A549 (cell line): ENCODE measurements at regions of chr17 and their contacts with region 1.

Region 1: DNA sequence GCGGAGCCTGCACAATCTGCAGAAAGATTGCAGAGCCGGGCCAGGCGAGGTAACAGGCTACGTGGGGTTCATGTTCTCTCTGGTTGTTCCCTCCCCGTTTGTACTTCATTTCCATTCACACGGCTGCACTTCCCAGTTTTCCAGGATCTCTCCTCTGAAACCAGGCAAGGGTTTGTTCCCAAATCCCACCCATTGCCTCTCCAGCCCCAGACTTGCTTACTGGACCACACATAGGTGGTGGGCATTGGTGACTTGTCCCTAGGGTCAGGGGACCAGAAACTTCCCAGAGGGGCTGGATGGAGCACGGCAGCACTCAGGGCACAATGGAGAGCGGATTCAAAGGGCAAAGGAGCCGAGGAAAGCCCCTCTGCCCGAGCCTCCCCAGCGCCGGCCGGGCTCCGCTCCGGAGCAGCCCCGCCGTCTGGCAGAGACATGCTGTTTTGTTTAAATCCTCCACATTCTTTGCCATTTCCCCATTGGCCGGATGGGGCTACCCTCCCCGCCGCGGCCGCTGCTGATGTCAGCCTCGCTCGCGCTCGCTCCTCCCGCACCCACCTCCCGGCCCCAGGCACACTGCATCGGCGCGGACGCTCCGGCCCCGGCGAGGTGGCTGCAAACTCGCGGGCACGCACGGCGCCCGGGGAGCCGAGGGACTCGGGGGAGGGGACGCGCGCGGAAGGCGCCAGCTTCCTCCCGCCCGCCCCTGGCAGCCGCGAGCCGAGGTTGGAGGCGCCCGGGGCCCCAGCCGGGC is at the start of gene PITPNC1:
- DNase-seq: peak; percentile 84 to 86
- ATAC-seq: peak; percentile 72 to 83
- H3K4me3 ChIP-seq: peak within 1 kb of the TSS; percentile 65
- H3K27ac ChIP-seq: peak within 1 kb of the TSS; percentile 77 to 86
- H3K4me1 ChIP-seq: peaks cover 14% of the 10 kb centered on the region; the same call in 2 of the 3 replicates
- CTCF ChIP-seq: 0 out of 3 replicates have a peak, but pooled peaks have one; percentile 14
- EP300 ChIP-seq: no peak
- POLR2A ChIP-seq: peak; percentile 57
- RAD21 ChIP-seq: no peak
- polyA plus RNA-seq, gene PITPNC1: 10.8 and 11.2 TPM in 2 replicates

Region 2: DNA sequence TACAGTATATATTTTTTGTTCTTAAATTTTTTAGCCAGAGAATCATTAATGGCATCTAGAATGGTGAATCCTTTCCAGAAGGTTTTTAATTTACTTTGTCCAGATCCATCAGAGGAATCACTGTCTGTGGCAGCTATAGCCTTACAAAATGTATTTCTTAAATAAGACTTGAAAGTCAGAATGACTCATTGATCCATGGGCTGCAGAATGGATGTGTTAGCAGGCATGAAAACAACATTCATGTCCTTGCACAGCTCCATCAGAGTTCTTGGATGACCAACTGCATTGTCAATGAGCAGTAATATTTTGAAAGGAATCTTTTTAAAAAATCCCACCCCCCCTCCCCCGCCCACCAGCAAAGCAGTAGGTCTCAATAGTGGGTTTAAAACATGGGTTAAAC is 281.1 kb before region 1 on chr17:
- CTCF ChIA-PET with region 1: no interaction called
- POLR2A ChIA-PET with region 1: no interaction called
- DNase-seq: no peak
- ATAC-seq: no peak
- H3K4me3 ChIP-seq: no peak overlapping the region
- H3K27ac ChIP-seq: no peak overlapping the region
- H3K4me1 ChIP-seq: peaks cover 9% of the 10 kb centered on the region
- CTCF ChIP-seq: no peak
- EP300 ChIP-seq: no peak
- POLR2A ChIP-seq: no peak
- RAD21 ChIP-seq: no peak

Region 3: GRCh38 chr17:67121316-67121887 is 255.5 kb before region 1 on chr17:
- CTCF ChIA-PET with region 1: no interaction called
- POLR2A ChIA-PET with region 1: no interaction called
- DNase-seq: no peak
- ATAC-seq: no peak
- H3K4me3 ChIP-seq: no peak overlapping the region
- H3K27ac ChIP-seq: no peak overlapping the region
- H3K4me1 ChIP-seq: no peaks in the 10 kb centered on the region
- CTCF ChIP-seq: no peak
- EP300 ChIP-seq: no peak
- POLR2A ChIP-seq: no peak
- RAD21 ChIP-seq: no peak

Region 4: GRCh38 chr17:67343251-67343650 is 33.7 kb before region 1 on chr17:
- CTCF ChIA-PET with region 1: interaction called, 10 read pairs
- POLR2A ChIA-PET with region 1: no interaction called
- DNase-seq: no peak
- ATAC-seq: no peak
- H3K4me3 ChIP-seq: no peak overlapping the region
- H3K27ac ChIP-seq: no peak overlapping the region
- H3K4me1 ChIP-seq: peaks cover 7% of the 10 kb centered on the region
- CTCF ChIP-seq: no peak
- EP300 ChIP-seq: no peak
- POLR2A ChIP-seq: no peak
- RAD21 ChIP-seq: no peak

Region 5: DNA sequence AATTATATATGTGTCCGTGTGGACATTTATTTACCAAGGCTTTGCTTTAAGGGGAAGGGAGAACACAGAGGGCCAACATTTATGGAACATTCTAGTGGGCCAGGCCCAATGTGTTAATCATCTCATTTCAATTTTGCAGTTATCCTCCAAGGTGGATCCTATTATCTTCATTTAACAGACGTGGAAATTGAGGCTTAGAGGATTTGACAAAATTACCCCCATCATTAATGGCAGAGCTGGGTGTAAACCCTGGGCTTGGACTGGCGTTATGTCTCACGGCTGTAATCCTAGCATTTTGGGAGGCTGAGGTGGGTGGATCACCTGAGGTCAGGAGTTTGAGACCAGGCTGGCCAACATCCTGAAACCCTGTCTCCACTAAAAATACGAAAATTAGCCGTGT is 26.6 kb after region 1 on chr17:
- CTCF ChIA-PET with region 1: interaction called, 10 read pairs
- POLR2A ChIA-PET with region 1: no interaction called
- DNase-seq: no peak
- ATAC-seq: no peak
- H3K4me3 ChIP-seq: no peak overlapping the region
- H3K27ac ChIP-seq: no peak overlapping the region
- H3K4me1 ChIP-seq: no peaks in the 10 kb centered on the region
- CTCF ChIP-seq: no peak
- EP300 ChIP-seq: no peak
- POLR2A ChIP-seq: no peak
- RAD21 ChIP-seq: no peak

Region 6: GRCh38 chr17:67459870-67460455 is 83.1 kb after region 1 on chr17:
- CTCF ChIA-PET with region 1: interaction called, 14 read pairs
- POLR2A ChIA-PET with region 1: no interaction called
- DNase-seq: no peak
- ATAC-seq: no peak
- H3K4me3 ChIP-seq: no peak overlapping the region
- H3K27ac ChIP-seq: no peak overlapping the region
- H3K4me1 ChIP-seq: no peaks in the 10 kb centered on the region
- CTCF ChIP-seq: no peak
- EP300 ChIP-seq: no peak
- POLR2A ChIP-seq: no peak
- RAD21 ChIP-seq: no peak

Region 7: DNA sequence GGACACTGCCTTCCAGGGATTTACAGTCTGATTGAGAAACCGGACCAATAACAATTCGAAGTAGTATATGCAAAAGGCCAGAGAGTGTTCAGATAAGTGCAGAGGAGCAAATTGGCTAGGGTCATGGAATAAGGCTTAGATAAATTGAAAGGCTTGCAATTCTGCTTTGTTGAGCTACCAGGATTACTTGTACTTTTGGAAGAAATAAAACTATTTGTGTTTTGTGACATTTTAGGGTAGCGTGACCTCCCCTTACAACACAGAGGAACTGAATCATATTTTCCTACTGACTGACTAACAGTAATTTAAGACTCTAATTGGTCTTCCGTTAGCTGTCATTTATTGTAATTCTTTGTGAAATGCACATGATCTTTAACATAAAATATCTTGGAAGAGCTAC is 104.9 kb after region 1 on chr17:
- CTCF ChIA-PET with region 1: interaction called, 323 read pairs
- POLR2A ChIA-PET with region 1: no interaction called
- DNase-seq: no peak
- ATAC-seq: no peak
- H3K4me3 ChIP-seq: no peak overlapping the region
- H3K27ac ChIP-seq: no peak overlapping the region
- H3K4me1 ChIP-seq: no peaks in the 10 kb centered on the region
- CTCF ChIP-seq: no peak
- EP300 ChIP-seq: no peak
- POLR2A ChIP-seq: no peak
- RAD21 ChIP-seq: no peak

Region 8: GRCh38 chr17:67610059-67610458 is 233.1 kb after region 1 on chr17:
- CTCF ChIA-PET with region 1: interaction called, 30 read pairs
- POLR2A ChIA-PET with region 1: no interaction called
- DNase-seq: no peak
- ATAC-seq: no peak
- H3K4me3 ChIP-seq: no peak overlapping the region
- H3K27ac ChIP-seq: no peak overlapping the region
- H3K4me1 ChIP-seq: peaks cover 7% of the 10 kb centered on the region; the same call in 1 of the 3 replicates
- CTCF ChIP-seq: no peak
- EP300 ChIP-seq: no peak
- POLR2A ChIP-seq: no peak
- RAD21 ChIP-seq: no peak

Region 9: DNA sequence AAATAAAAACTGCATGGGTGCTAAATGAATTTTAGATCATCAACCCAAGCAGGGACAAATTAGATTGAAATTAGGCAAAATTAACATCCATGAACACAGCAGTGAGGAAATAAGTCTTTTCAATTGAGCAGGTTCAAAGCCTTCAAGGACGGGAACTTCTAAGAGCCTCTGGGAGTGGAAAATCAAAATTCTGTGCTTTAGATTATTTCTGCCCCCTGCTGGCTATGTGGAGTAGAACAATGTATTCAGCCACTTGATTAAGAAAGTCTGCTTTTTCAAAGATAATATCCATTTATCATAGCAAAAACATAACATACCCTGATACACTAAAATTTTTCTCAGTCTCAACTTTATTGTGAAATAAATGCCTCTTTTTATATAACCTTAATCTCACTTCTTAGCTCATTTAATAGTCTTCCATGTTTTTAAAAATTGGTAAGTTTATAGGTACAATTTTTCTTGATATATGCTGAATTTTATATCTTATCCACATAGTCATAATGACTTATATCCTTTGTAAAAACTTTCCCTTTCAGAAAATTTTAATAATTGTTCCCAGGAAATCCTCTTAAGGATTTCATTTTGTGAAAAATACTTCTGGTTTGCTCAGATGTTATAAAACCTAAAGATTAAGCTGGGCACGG is 312.7 kb after region 1 on chr17:
- CTCF ChIA-PET with region 1: interaction called, 105 read pairs
- POLR2A ChIA-PET with region 1: no interaction called
- DNase-seq: peak; percentile 69 to 85
- ATAC-seq: peak; percentile 54 to 68; a peak in 2 of 6 replicates
- H3K4me3 ChIP-seq: no peak overlapping the region
- H3K27ac ChIP-seq: no peak overlapping the region
- H3K4me1 ChIP-seq: no peaks in the 10 kb centered on the region
- CTCF ChIP-seq: peak; percentile 93
- EP300 ChIP-seq: no peak
- POLR2A ChIP-seq: no peak
- RAD21 ChIP-seq: peak; percentile 78 to 83